Activated naive CD4-positive, alpha-beta T cell treated with anti-CD3 and anti-CD28 coated beads for 36 hours (primary cell): ENCODE measurements at regions of chr1 and their contacts with region 1.

Region 1: DNA sequence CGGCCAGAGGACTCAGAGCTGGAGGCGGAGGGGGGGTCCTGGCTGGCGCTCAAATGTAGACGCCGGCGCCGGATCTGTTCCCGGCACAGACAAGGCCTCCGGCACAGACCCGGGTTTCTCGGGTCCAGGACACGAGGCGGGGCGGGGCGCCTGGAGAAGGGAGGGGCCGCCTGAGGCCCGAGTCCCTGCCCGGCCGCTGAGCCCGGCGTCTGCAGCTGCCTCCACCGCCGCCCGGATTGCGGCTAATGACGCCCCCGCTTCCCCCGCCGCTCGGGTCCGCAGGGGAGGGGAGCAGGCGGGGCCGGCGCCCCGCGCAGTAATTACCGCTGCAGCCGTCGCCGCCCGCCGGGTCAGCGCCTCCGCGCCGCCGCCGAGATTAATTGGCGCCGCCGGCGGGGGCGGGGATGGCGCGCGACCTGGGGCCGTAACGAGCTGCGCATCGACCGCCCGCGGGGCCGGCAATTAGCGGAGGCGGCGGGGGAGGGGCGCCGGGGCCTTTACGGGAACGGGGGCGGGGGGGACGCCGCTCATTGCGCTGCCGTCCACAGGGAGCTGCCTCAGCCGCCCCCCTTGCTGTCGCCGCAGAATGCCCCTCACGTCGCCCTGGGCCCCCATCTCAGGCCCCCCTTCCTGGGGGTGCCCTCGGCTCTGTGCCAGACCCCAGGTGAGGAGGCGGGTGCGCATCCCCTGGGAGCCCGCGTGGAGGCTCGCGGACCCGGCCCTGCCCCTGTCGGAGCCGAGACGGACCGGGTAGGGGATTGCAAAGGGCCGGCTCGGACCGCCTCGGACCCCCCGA is 17.3 kb downstream of the NOC2L start:
- DNase-seq: no peak
- H3K4me3 Mint-ChIP-seq: no peak overlapping the region
- H3K27ac Mint-ChIP-seq: no peak overlapping the region
- H3K4me1 Mint-ChIP-seq: peaks cover 7% of the 10 kb centered on the region
- H3K27me3 Mint-ChIP-seq: peaks cover 20% of the 10 kb centered on the region

Region 2: GRCh38 chr1:958823-959729 is 17.3 kb after region 1 on chr1 and contains the start of gene NOC2L:
- CTCF ChIA-PET with region 1: interaction called, 3 read pairs
- intact Hi-C with region 1: loop called (anchors 2 kb)
- DNase-seq: peak; percentile 97
- H3K4me3 Mint-ChIP-seq: peak within 1 kb of the TSS; percentile 98
- H3K27ac Mint-ChIP-seq: no peak within 1 kb of the TSS
- H3K4me1 Mint-ChIP-seq: peaks cover 17% of the 10 kb centered on the region
- H3K27me3 Mint-ChIP-seq: no peaks in the 10 kb centered on the region
- total RNA-seq, gene NOC2L: 113 to 119 TPM

Region 3: DNA sequence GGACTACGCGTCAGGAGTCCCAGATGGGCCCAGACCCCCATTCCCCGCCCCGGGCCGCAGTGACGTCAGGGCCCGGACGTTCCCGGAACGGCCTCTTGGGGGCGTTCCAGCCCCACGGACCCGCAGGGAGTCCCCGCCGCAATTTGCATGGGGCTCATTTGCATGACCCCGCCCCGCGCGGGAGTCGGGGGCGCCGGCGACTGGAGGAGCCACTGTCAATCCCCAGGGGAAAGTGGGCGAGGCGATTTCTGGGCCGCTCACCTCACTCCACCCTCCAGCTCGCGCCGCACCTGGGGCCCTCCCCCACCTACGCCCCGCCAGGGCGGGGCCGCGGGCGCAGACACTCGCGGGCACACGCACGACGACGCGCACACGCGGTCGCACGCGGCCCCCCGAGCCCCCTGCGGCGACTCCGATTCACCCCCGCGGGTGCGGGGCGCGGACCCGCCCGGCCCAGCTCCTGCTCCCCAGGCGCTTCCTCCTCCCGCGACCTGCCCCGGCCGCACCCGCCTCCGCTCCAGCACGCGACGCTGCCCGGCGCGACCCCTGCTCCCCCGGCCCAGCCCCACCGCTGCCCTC is 91.3 kb after region 1 on chr1:
- CTCF ChIA-PET with region 1: no interaction called
- intact Hi-C with region 1: no loop called
- DNase-seq: peak; percentile 97
- H3K4me3 Mint-ChIP-seq: peak overlapping the region; percentile 45
- H3K27ac Mint-ChIP-seq: no peak overlapping the region
- H3K4me1 Mint-ChIP-seq: peaks cover 9% of the 10 kb centered on the region
- H3K27me3 Mint-ChIP-seq: peaks cover 9% of the 10 kb centered on the region